A549 (cell line): ENCODE measurements at regions of chr12 and their contacts with region 1.

Region 1: GRCh38 chr12:1795785-1796514 is 24.4 kb upstream of the LRTM2 start:
- DNase-seq: peak; percentile 85 to 90
- ATAC-seq: peak; percentile 95 to 98
- H3K4me3 ChIP-seq: peak overlapping the region; percentile 54
- H3K27ac ChIP-seq: peak overlapping the region; percentile 78 to 85
- H3K4me1 ChIP-seq: peaks cover 10% of the 10 kb centered on the region
- CTCF ChIP-seq: peak; percentile 98
- EP300 ChIP-seq: no peak
- POLR2A ChIP-seq: peak; percentile 87
- RAD21 ChIP-seq: peak; percentile 90 to 99

Region 2: GRCh38 chr12:1644534-1645438 is 151.2 kb before region 1 on chr12:
- CTCF ChIA-PET with region 1: interaction called, 483 read pairs
- POLR2A ChIA-PET with region 1: no interaction called
- DNase-seq: no peak
- ATAC-seq: no peak
- H3K4me3 ChIP-seq: no peak overlapping the region
- H3K27ac ChIP-seq: no peak overlapping the region
- H3K4me1 ChIP-seq: no peaks in the 10 kb centered on the region
- CTCF ChIP-seq: no peak
- EP300 ChIP-seq: no peak
- POLR2A ChIP-seq: no peak
- RAD21 ChIP-seq: no peak

Region 3: GRCh38 chr12:1668833-1669543 is 127.0 kb before region 1 on chr12:
- CTCF ChIA-PET with region 1: interaction called, 19 read pairs
- POLR2A ChIA-PET with region 1: no interaction called
- DNase-seq: no peak
- ATAC-seq: peak in 1 of 2 experiments; percentile 36; a peak in 2 of 6 replicates
- H3K4me3 ChIP-seq: no peak overlapping the region
- H3K27ac ChIP-seq: no peak overlapping the region
- H3K4me1 ChIP-seq: peaks cover 9% of the 10 kb centered on the region; the same call in 2 of the 3 replicates
- CTCF ChIP-seq: no peak
- EP300 ChIP-seq: no peak
- POLR2A ChIP-seq: no peak
- RAD21 ChIP-seq: no peak

Region 4: DNA sequence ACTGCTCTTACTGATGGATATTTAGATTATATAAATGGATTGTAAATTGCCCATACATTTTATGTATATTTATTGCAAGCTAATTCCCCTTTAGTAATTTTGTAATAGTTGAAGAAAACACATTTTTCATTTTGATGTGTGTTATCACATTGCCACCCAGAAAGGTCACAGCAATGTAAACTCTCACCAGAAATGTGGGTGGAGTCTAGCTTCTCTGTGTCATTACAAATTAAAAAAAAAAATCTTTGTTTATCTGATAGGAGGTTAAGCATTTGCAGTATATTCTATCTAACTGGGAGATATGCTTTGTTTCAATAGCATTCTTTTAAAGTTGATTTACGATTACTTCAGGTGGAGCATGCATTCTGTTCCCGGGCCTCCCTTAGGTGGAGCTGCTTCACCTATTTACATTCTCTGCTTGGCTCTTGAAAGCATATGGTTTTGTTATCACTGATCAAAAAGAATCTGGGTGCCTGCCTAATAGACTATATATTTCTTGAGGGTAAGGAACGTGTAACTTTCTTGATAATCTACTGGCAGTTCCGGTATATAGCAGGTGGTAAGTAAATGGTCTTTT is 97.2 kb before region 1 on chr12:
- CTCF ChIA-PET with region 1: interaction called, 17 read pairs
- POLR2A ChIA-PET with region 1: no interaction called
- DNase-seq: no peak
- ATAC-seq: no peak
- H3K4me3 ChIP-seq: no peak overlapping the region
- H3K27ac ChIP-seq: no peak overlapping the region
- H3K4me1 ChIP-seq: peaks cover 6% of the 10 kb centered on the region; the same call in 2 of the 3 replicates
- CTCF ChIP-seq: no peak
- EP300 ChIP-seq: no peak
- POLR2A ChIP-seq: no peak
- RAD21 ChIP-seq: 0 out of 5 replicates have a peak, but pooled peaks of 1 of the 2 experiments have one; percentile 20

Region 5: DNA sequence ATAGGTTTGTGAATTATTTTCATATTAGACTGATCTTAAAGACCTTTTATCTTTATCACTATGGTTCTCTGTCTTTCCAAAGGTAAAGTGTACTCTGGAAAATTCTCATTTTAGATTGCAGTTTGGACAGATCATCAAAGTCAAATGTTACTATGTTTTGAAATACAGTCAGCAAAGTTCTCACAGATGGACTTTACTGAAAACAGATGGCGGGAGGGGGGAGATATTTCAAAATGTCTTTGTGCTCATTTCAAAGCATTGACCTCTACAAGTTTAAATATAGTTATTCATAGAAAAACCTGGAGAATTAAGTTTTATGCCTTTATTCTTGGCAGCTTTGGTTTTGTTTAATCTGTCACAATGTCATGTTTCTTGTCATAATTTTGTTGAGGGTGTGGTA is 27.3 kb before region 1 on chr12:
- CTCF ChIA-PET with region 1: interaction called, 24 read pairs
- POLR2A ChIA-PET with region 1: no interaction called
- DNase-seq: no peak
- ATAC-seq: no peak
- H3K4me3 ChIP-seq: no peak overlapping the region
- H3K27ac ChIP-seq: no peak overlapping the region
- H3K4me1 ChIP-seq: peaks cover 44% of the 10 kb centered on the region
- CTCF ChIP-seq: no peak
- EP300 ChIP-seq: no peak
- POLR2A ChIP-seq: no peak
- RAD21 ChIP-seq: no peak

Region 6: GRCh38 chr12:1939801-1940607 is 144.1 kb after region 1 on chr12:
- CTCF ChIA-PET with region 1: interaction called, 324 read pairs
- POLR2A ChIA-PET with region 1: interaction called, 7 read pairs
- DNase-seq: peak; percentile 72 to 80
- ATAC-seq: peak; percentile 90 to 94
- H3K4me3 ChIP-seq: no peak overlapping the region
- H3K27ac ChIP-seq: no peak overlapping the region
- H3K4me1 ChIP-seq: peaks cover 17% of the 10 kb centered on the region
- CTCF ChIP-seq: peak; percentile 91
- EP300 ChIP-seq: no peak
- POLR2A ChIP-seq: no peak
- RAD21 ChIP-seq: peak; percentile 93 to 94

Region 7: DNA sequence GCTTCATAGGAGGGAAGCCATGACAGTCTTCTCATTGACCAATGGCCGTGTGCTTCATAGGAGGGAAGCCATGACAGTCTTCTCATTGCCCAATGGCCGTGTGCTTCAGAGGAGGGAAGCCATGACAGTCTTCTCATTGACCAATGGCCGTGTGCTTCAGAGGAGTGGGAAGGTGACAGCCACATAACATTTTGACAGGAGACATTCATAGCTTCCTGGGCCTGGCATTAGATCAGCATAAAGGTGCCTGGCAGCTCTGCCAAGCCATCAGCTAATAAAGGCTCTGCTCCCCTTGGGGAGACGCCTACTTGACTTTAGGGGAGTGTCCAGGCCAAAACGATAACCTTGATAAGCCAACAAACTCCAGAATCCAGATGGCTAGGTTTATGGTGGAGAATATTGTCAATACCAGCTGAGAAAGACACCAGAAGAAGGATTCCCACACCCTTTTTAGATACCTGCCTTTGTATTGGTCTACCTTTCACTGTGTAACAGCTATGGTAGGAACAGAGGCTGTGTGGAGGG is 724.8 kb after region 1 on chr12:
- CTCF ChIA-PET with region 1: no interaction called
- POLR2A ChIA-PET with region 1: no interaction called
- DNase-seq: peak in 1 of 2 experiments; percentile 5
- ATAC-seq: no peak
- H3K4me3 ChIP-seq: no peak overlapping the region
- H3K27ac ChIP-seq: no peak overlapping the region
- H3K4me1 ChIP-seq: no peaks in the 10 kb centered on the region
- CTCF ChIP-seq: no peak
- EP300 ChIP-seq: no peak
- POLR2A ChIP-seq: no peak
- RAD21 ChIP-seq: no peak

Region 8: GRCh38 chr12:2535583-2536204 is 739.7 kb after region 1 on chr12:
- CTCF ChIA-PET with region 1: no interaction called
- POLR2A ChIA-PET with region 1: no interaction called
- DNase-seq: no peak
- ATAC-seq: no peak
- H3K4me3 ChIP-seq: no peak overlapping the region
- H3K27ac ChIP-seq: no peak overlapping the region
- H3K4me1 ChIP-seq: no peaks in the 10 kb centered on the region
- CTCF ChIP-seq: no peak
- EP300 ChIP-seq: no peak
- POLR2A ChIP-seq: no peak
- RAD21 ChIP-seq: no peak

Region 9: GRCh38 chr12:2583091-2583497 is 787.1 kb after region 1 on chr12:
- CTCF ChIA-PET with region 1: interaction called, 13 read pairs
- POLR2A ChIA-PET with region 1: no interaction called
- DNase-seq: peak; percentile 41 to 55
- ATAC-seq: peak; percentile 84 to 97
- H3K4me3 ChIP-seq: peak overlapping the region; percentile 30; the same call in 2 of the 3 replicates
- H3K27ac ChIP-seq: no peak overlapping the region
- H3K4me1 ChIP-seq: peaks cover 3% of the 10 kb centered on the region; the same call in 1 of the 3 replicates
- CTCF ChIP-seq: peak; percentile 83
- EP300 ChIP-seq: no peak
- POLR2A ChIP-seq: no peak
- RAD21 ChIP-seq: peak; percentile 77 to 91